Heart left ventricle (tissue), 16 donors: ENCODE measurements at regions of chr6 and their contacts with region 1.

Region 1: GRCh38 chr6:107318100-107318736 is 141.1 kb downstream of the PDSS2 start:
- DNase-seq: peak in 4 of 5 donors; percentile 41 to 58 (median 49)
- ATAC-seq: peak; percentile 64 to 95 (median 92)
- H3K4me3 ChIP-seq: no peak overlapping the region
- H3K27ac ChIP-seq: no peak overlapping the region
- H3K4me1 ChIP-seq: peaks cover 0 to 6% (median 0%) of the 10 kb centered on the region in 12 donors
- H3K27me3 ChIP-seq: no peaks in the 10 kb centered on the region
- CTCF ChIP-seq: peak; percentile 39 to 77 (median 62)
- POLR2A ChIP-seq: no peak

Region 2: GRCh38 chr6:107009499-107009898 is 308.7 kb before region 1 on chr6:
- intact Hi-C with region 1: no loop called
- DNase-seq: no peak
- ATAC-seq: no peak
- H3K4me3 ChIP-seq: no peak overlapping the region
- H3K27ac ChIP-seq: no peak overlapping the region
- H3K4me1 ChIP-seq: no peaks in the 10 kb centered on the region
- H3K27me3 ChIP-seq: peaks cover 0 to 4% (median 0%) of the 10 kb centered on the region in 9 donors
- CTCF ChIP-seq: no peak
- POLR2A ChIP-seq: no peak

Region 3: DNA sequence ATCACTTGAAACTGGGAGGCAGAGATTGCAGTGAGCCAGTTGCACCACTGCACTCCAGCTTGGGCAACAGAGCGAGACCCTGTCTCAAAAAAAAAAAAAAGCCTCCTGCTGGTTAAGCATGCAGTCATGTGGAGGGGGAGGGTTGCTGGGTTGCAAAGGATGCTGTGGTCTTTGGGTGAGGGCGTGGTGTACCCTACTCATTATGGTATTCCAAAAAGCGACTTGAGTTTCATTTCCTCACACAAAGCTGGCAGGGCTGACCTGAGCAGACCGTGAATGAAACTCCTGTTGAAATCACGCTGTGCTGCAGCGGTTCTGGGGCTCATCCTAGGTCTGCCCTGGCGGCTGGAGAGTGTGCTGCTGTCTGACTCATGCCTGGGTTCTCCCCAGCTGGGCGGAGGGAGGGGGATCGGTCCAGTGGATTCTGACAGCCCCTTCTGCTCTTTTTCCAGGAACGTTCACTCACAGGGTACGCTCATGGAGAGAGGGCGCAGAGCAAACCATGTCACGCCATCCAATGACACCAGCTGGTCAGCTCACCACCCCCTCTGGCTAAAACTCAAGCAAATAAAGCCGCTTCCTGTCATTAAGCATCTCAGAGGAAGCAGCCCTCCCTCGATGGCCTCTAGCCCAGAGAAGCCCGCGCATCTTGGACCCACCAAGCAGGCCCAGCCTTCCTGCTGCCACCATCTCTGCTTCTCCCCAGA is 339.7 kb after region 1 on chr6:
- intact Hi-C with region 1: loop called in 1 of 10 experiments (anchors 5 kb)
- DNase-seq: peak in 4 of 5 donors; percentile 39 to 60 (median 52)
- ATAC-seq: peak in 3 of 4 donors; percentile 47 to 58 (median 51)
- H3K4me3 ChIP-seq: peak overlapping the region in 1 of 12 donors; percentile 8
- H3K27ac ChIP-seq: peak overlapping the region in 3 of 12 donors; percentile 37 to 62 (median 38)
- H3K4me1 ChIP-seq: peaks cover 0 to 63% (median 24%) of the 10 kb centered on the region in 12 donors
- H3K27me3 ChIP-seq: no peaks in the 10 kb centered on the region
- CTCF ChIP-seq: peak in 3 of 12 donors; percentile 3 to 19 (median 15)
- POLR2A ChIP-seq: no peak

Region 4: GRCh38 chr6:107674995-107675738 is 356.9 kb after region 1 on chr6:
- intact Hi-C with region 1: loop called in 3 of 10 experiments (anchors 10 kb)
- DNase-seq: peak; percentile 85 to 92 (median 87)
- ATAC-seq: peak; percentile 88 to 95 (median 94)
- H3K4me3 ChIP-seq: peak overlapping the region in 9 of 12 donors; percentile 7 to 46 (median 26)
- H3K27ac ChIP-seq: peak overlapping the region in 3 of 12 donors; percentile 16 to 57 (median 55)
- H3K4me1 ChIP-seq: peaks cover 0 to 32% (median 16%) of the 10 kb centered on the region in 12 donors
- H3K27me3 ChIP-seq: no peaks in the 10 kb centered on the region
- CTCF ChIP-seq: peak; percentile 83 to 95 (median 92)
- POLR2A ChIP-seq: no peak

Region 5: DNA sequence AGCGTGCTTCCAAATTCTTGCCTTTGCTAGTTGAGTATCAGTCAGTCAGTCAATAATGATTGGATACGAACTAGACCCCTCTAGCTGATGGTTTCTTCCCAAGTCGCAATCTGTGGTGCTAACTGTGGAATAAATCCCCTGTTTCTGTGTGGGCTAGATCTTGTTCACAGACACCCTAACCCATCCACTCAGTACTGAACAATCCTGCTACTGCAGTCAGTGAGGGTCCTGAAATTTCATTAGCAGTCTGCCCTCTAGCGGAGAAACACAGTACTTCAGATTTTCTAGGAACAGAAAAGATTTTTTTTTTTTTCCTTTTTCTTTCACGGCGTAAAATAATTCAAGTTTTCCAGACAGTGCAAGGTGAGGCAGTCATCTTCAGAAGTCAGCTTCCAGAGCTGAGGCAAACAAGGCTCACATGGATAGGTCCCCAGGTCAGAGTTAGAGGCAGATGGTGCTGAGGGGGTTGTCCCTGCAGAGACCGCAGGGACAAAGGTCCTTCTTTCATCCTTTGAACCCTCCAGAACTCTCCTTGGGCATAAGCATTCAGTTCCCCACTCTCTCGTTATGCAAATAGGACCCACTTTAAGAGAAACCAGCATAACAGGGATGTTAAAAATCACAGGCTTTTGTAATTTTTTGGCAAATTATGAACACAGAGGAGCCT is 386.3 kb after region 1 on chr6:
- intact Hi-C with region 1: loop called in 5 of 10 experiments (anchors 2 to 10 kb)
- DNase-seq: no peak
- ATAC-seq: peak in 2 of 4 donors; percentile 55 to 56
- H3K4me3 ChIP-seq: peak overlapping the region in 1 of 12 donors; percentile 19
- H3K27ac ChIP-seq: no peak overlapping the region
- H3K4me1 ChIP-seq: peaks cover 0 to 6% (median 0%) of the 10 kb centered on the region in 12 donors
- H3K27me3 ChIP-seq: no peaks in the 10 kb centered on the region
- CTCF ChIP-seq: peak; percentile 75 to 92 (median 84)
- POLR2A ChIP-seq: no peak

Region 6: DNA sequence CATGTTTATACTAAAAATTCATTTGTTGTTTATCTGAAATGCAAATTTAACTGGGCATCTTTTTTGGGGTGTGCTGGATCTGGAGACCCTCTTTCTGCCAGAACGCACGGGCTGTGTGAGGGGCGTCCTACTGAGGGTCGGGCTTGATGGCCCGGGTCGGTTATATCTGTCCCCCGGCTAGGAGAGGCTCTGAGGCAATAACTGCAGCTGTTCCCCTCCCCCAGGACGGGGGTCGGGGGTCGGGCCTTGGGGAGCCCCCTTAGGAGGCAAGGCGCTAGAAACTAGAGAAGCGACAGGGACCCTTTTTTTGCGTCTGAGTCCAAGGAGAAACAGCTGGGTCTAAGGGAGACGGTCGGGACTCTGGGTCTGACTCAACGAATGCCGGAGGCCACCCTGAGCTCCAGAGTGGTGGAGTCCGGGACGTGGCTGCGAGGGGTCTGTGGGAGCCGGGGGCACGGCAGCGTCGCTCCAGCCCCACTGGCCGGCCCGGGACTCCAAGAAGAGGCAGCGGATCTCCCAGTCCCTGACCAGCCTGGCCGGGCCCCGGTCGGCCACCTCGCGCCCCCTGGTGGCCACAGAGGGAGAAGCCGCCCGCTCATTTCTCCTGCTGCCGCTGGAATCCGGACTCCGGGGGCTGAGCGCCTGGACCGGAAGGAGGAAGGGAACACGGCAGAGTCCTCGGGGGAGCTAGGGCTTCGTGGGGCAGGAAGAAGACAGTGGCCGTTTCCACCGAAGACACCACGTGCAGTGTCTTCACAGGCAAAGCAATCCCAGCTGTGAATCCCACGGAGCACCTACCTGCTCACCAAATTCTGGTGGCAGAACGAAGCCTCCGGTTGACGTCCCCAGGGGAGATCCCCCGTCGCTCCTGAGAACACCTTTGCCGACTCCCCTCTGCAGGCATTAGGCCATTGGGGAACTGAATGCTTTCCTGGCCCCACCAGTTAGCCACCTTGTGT is 529.9 kb after region 1 on chr6:
- intact Hi-C with region 1: loop called in 2 of 10 experiments (anchors 2 to 10 kb)
- DNase-seq: peak; percentile 81 to 94 (median 83)
- ATAC-seq: peak; percentile 83 to 98 (median 95)
- H3K4me3 ChIP-seq: peak overlapping the region in 11 of 12 donors; percentile 4 to 57 (median 43)
- H3K27ac ChIP-seq: no peak overlapping the region
- H3K4me1 ChIP-seq: peaks cover 0 to 11% (median 5%) of the 10 kb centered on the region in 12 donors
- H3K27me3 ChIP-seq: peaks cover 0 to 16% (median 6%) of the 10 kb centered on the region in 9 donors
- CTCF ChIP-seq: peak; percentile 93 to 98 (median 97)
- POLR2A ChIP-seq: no peak